Lower leg skin (tissue), 4 donors: ENCODE measurements at regions of chr1 and their contacts with region 1.

Region 1: DNA sequence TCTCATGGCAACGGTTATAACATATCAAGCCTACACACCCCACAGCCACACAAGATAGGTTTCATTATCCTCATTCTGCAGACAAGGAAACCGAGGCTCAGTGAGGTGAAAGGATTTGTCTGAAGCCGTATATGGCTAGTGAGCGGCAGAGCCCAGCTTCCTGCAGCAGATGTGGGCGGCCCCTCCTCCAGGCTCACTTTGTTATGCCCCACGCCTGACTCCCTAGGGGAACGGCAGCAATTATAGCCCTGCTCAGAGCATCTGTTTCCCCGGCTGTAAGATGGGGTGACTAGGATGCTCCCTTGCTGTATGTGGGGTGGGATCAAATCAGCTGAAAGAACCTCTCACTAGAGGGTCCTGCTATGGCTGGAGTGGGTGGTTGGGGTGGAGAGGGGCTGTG is 22.1 kb downstream of the GRHL3 start:
- DNase-seq: no peak
- H3K4me3 ChIP-seq: no peak overlapping the region
- CTCF ChIP-seq: no peak
- POLR2A ChIP-seq: no peak

Region 2: DNA sequence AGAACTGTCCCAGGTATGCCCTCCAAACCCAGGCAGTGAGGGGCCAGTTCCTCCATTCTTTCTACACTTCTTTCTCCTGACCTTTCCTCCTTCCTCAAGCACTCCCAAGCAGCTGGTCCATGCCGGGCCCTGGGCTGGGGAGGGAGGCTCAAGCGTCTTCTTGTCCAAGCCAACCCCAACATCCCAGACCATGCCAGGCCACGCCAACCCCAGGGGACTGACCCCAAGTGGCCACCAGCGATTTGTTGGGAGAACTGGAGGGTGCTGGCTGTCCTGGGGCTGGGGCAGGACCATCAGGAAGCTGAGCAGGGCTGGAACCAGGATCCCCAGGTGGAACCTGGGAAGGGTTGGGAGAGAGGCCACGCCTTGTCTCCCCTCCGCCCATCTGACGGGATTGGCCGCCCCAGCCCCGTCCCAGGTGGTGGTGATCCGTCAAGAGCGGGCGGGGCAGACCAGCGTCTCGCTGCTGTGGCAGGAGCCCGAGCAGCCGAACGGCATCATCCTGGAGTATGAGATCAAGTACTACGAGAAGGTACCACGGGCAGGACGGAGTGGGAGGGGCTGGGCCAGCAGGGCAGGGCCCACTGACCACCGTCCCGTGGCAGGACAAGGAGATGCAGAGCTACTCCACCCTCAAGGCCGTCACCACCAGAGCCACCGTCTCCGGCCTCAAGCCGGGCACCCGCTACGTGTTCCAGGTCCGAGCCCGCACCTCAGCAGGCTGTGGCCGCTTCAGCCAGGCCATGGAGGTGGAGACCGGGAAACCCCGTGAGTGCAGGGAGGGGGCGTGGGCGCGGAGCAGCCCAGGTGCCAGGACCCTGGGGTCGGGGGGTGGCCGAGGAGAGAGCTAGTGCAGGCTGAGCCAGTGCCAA is 1748.1 kb before region 1 on chr1:
- intact Hi-C with region 1: no loop called
- DNase-seq: no peak
- H3K4me3 ChIP-seq: no peak overlapping the region
- CTCF ChIP-seq: no peak
- POLR2A ChIP-seq: no peak

Region 3: DNA sequence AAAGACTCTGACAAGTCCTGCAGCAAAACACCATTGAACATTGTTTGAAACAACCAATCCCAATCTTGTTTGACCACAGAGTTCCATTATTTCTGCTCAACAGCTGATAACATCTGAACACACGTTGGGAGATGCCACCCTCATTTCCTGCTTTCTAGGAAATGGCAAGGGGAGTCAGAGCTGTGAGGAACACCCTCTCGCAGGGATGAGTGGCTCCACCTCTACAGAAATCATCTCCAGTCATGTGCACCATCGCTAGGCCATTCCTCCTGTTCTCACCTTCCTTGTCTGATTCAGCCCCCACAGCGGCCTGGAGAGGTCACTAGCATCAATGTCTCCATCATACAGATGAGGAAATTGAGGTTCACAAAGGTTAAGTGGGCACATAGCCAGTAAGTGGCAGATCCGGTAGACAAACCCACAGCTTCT is 611.2 kb after region 1 on chr1:
- intact Hi-C with region 1: loop called (anchors 5 kb)
- DNase-seq: no peak
- H3K4me3 ChIP-seq: no peak overlapping the region
- CTCF ChIP-seq: no peak
- POLR2A ChIP-seq: no peak